AG04449 (cell line): ENCODE measurements at regions of chr11 and their contacts with region 1.

Region 1: GRCh38 chr11:1598816-1599215 is 722 bp upstream of the KRTAP5-2 start:
- DNase-seq: no peak
- H3K4me3 ChIP-seq: no peak overlapping the region
- CTCF ChIP-seq: no peak

Region 2: DNA sequence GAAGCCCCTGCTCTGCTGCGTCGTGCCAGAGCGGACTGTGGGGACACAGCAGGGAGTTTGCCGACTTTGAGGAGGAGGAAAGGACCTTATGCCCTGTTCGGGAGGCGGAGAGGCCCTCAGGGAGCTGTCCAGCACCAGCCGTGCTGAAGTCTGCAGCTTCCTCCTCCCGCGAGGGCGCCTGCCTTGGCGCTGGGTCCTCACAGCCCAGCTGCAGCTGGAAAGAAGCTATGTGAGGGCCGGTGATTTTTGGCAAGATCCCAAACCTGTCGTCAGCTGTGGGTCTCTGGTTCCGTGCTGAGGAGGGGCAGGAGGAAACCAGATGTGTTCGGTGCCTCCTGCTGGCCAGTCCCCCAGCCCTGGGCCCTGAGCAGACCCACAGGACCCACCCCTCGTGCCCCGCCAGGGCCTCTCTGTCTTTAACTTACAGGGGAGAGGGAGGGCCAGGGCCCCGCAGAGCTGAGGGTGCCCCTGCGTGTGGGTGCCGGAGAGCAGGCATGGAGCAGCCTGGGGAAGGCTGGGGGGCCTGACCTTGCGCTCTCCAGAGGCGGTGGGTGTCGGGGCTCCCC is 197.1 kb before region 1 on chr11:
- CTCF ChIA-PET with region 1: no interaction called
- POLR2A ChIA-PET with region 1: no interaction called
- DNase-seq: no peak
- H3K4me3 ChIP-seq: no peak overlapping the region
- CTCF ChIP-seq: no peak

Region 3: DNA sequence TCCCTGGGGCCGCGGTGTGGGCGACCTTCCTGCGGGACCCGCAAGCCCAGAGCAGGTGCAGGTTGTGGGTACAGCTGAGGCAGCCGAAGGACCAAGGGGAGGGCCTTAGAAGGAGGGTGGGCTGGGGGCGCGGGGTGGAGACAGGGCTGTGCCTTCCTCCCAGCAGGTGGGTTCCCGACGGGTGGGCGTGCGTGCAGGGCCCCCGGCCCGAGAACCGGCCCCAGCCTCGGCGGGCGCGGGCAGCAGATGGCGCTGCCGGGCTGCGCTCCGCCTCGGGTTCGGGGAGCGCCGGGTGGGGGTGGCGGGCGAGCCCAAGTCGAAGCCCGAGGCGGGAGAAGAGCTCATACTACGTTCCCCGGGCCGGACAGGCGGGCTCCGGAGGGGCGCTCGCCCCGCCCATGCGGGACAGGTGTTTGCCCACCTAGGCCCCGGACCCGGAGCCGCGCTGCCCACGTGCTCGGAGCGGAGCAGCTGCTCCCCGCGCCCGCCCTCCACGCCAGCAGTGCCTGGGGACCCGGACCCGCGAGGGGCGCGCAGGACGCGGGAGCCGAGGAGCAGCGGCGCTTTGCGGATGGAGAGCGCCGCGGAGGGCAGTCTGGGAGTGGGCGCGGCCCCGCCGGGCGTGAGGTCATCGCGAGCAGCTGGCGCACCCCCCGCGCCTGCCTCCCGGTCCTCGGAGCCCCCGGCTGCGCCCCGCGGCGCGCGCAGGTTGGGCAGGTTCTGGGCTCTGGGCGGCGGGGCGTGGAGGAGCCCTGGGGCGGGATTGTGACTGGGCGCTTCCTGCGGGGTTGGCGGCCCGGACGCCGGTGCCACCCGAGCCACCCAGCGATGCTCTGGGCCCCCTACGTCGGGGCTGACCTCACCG is 52.0 kb before region 1 on chr11:
- CTCF ChIA-PET with region 1: interaction called, 49 read pairs
- POLR2A ChIA-PET with region 1: no interaction called
- DNase-seq: no peak
- H3K4me3 ChIP-seq: peak overlapping the region; percentile 33; the same call in 1 of the 2 replicates
- CTCF ChIP-seq: peak; percentile 68

Region 4: DNA sequence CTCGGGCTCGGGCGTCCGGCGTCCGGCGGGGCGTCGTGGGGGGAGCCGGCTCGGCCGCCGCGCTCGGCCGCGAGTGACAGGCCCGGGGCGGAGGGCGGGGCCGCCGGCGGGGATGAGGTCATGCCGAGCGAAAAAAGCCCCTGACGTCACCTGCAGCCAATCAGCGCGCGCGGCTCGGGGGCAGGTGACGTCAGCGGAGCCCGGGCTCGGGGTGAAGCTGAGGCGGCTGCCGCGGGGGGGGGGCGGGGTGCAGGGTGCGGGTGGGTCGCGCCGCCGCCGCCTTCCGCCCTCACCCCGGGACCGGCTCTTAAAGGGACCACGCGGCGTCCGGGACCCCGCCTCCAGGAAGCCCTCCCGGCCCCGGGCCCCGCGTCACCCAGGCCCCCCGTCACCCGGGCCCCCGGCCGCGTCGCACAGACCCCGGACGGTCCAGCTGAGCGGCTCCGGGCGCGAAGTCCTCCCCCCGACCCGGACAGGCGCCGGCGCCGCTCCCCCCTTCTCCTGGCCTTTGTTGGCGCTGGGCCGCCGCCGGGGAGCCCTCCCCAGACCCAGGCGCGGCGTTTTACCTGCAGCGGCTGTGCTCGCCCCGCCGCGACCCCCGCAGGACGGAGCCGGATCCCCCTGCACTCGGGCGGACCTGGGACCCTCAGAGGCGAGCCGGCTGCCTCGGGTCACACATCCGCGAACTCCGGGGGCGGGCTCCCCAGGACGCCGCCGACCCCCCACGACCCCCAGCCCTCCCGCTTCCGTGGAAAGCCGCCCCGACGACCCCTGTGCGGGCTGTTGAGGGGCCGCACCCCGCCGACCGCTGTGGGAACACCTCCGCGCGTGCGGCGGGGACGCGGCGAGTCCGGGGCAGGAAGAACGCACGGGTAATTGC is 26.4 kb before region 1 on chr11 and contains the start of gene DUSP8:
- CTCF ChIA-PET with region 1: interaction called, 103 read pairs
- POLR2A ChIA-PET with region 1: no interaction called
- DNase-seq: no peak
- H3K4me3 ChIP-seq: peak within 1 kb of the TSS; percentile 63
- CTCF ChIP-seq: no peak

Region 5: GRCh38 chr11:1586699-1587098 is 12.1 kb before region 1 on chr11:
- CTCF ChIA-PET with region 1: interaction called, 37 read pairs
- POLR2A ChIA-PET with region 1: no interaction called
- DNase-seq: no peak
- H3K4me3 ChIP-seq: no peak overlapping the region
- CTCF ChIP-seq: no peak

Region 6: GRCh38 chr11:1613516-1613915 is 14.7 kb after region 1 on chr11:
- CTCF ChIA-PET with region 1: interaction called, 16 read pairs
- POLR2A ChIA-PET with region 1: no interaction called
- DNase-seq: no peak
- H3K4me3 ChIP-seq: no peak overlapping the region
- CTCF ChIP-seq: no peak

Region 7: GRCh38 chr11:1628506-1629325 is 29.9 kb after region 1 on chr11:
- CTCF ChIA-PET with region 1: interaction called, 15 read pairs
- POLR2A ChIA-PET with region 1: no interaction called
- DNase-seq: no peak
- H3K4me3 ChIP-seq: no peak overlapping the region
- CTCF ChIP-seq: peak; percentile 95

Region 8: DNA sequence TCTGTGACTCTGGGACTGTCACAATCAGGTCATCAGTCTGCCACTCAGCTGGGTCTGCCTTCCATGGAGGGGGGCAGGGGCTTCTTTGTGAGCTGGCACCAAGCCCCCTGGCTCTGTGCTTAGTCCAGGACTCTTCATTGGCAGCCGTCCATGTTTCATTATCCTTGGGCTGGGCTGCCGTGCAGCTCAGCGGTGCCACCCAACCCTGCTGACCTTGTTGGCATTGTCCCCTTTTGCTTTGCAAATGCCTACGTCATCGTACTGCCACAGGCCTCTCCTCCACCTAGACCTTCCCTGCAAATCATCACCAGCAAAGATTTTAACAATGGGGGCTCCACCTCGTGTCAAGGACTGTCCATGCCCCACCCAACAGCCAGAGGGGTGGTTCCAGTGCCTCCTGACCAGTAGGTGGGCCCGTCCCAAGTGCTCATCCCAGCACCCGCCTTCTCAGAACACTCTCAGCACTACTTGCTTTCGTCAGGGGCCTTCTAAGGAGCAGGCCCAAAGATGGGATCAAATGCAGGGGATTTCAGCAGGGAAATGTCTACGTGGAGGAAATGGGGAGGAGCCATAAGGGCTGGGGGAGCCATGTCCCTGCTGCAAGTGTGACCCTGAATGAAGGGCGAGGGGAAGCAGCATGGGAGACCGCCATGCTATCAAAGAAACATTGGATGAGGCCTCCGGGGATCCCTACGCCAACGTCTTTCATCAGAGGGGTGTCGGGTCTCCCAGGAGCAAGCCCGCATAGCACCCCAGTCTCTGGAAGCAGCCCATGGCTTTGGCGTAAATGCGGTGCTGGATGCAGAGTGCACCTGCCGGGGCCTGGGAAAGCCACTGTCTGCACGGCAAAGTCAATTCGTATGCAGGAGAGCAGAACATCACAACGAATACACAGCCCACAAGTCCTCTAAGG is 116.4 kb after region 1 on chr11:
- CTCF ChIA-PET with region 1: no interaction called
- POLR2A ChIA-PET with region 1: no interaction called
- DNase-seq: no peak
- H3K4me3 ChIP-seq: no peak overlapping the region
- CTCF ChIP-seq: no peak